Right lobe of liver (tissue), 6 donors: ENCODE measurements at regions of chr7 and their contacts with region 1.

Region 1: DNA sequence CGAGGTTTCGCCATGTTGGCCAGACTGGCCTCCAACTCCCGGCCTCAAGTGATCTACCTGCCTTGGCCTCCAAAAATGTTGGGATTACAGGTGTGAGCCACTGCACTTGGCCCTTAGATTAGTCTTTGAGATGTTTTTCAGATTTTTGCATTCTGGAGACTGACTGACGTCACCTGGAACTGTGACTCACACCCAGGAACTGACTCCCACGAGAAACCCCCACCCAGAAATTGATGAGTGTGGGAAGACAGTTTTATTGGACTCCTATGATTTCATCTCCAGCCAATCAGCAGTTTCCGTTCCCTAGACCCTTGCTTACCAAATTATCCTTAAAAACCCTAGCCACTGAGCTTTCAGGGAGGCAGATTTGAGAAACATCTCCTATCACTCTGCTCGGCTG is 867.3 kb downstream of the TYW1 start:
- DNase-seq: no peak
- ATAC-seq: no peak
- H3K4me3 ChIP-seq: no peak overlapping the region
- H3K27ac ChIP-seq: no peak overlapping the region
- H3K4me1 ChIP-seq: no peaks in the 10 kb centered on the region
- H3K27me3 ChIP-seq: no peaks in the 10 kb centered on the region
- CTCF ChIP-seq: no peak
- POLR2A ChIP-seq: no peak

Region 2: DNA sequence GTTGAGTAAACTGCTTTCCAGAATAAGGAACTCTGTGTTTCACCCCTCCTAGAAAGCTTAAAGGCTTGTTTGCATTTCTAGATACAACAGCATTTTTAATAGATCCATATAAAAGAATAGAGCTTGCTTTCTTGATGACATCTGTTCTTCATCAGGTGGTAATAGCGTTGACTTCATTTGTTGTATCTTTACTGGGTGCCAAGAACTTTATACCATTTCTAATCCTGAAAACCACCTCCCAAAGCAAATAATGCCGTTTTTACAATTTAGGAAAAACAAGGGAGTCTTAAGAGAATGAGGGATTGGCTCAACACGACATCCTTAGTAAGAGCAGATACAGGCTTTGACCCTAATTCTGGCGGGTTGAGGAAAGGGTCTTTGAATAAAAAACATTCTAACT is 126.1 kb after region 1 on chr7:
- intact Hi-C with region 1: no loop called
- DNase-seq: no peak
- ATAC-seq: no peak
- H3K4me3 ChIP-seq: no peak overlapping the region
- H3K27ac ChIP-seq: no peak overlapping the region
- H3K4me1 ChIP-seq: no peaks in the 10 kb centered on the region
- H3K27me3 ChIP-seq: no peaks in the 10 kb centered on the region
- CTCF ChIP-seq: no peak
- POLR2A ChIP-seq: no peak

Region 3: GRCh38 chr7:68103319-68103718 is 239.4 kb after region 1 on chr7:
- intact Hi-C with region 1: loop called in 1 of 2 experiments (anchors 5 kb)
- DNase-seq: no peak
- ATAC-seq: no peak
- H3K4me3 ChIP-seq: no peak overlapping the region
- H3K27ac ChIP-seq: no peak overlapping the region
- H3K4me1 ChIP-seq: no peaks in the 10 kb centered on the region
- H3K27me3 ChIP-seq: no peaks in the 10 kb centered on the region
- CTCF ChIP-seq: no peak
- POLR2A ChIP-seq: no peak